ENCODE measurements at regions of chr7 and their contacts with region 1.

Region 1: GRCh38 chr7:143287935-143288826 is at the start of gene CASP2:
- DNase-seq: peak; percentile 99
- H3K4me3 Mint-ChIP-seq: peak within 1 kb of the TSS; percentile 93
- H3K27ac Mint-ChIP-seq: peak within 1 kb of the TSS; percentile 97
- H3K4me1 Mint-ChIP-seq: peaks cover 44% of the 10 kb centered on the region
- H3K27me3 Mint-ChIP-seq: no peaks in the 10 kb centered on the region
- total RNA-seq, gene CASP2: 117 to 129 TPM

Region 2: DNA sequence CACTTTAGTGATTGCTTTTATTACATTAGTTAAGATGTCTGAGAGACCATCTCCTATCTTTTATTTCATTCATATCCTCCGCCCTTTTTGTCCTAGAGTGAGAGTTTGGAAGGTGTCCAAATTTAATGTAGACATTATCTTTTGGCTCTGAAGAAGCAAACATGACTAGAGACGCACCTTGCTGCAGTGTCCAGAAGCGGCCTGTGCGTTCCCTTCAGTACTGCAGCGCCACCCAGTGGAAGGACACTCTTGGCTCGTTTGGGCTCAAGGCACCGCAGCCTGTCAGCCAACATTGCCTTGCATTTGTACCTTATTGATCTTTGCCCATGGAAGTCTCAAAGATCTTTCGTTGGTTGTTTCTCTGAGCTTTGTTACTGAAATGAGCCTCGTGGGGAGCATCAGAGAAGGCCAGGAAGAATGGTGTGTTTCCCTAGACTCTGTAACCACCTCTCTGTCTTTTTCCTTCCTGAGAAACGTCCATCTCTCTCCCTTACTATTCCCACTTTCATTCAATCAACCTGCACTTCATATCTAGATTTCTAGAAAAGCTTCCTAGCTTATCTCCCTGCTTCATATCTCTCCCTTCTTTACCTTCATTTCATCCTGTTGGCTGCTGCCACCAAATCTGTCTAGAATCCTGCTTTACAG is 17.4 kb after region 1 on chr7:
- CTCF ChIA-PET with region 1: interaction called, 11 read pairs
- POLR2A ChIA-PET with region 1: interaction called, 10 read pairs
- intact Hi-C with region 1: no loop called
- DNase-seq: peak; percentile 82
- H3K4me3 Mint-ChIP-seq: no peak overlapping the region
- H3K27ac Mint-ChIP-seq: peak overlapping the region; percentile 64
- H3K4me1 Mint-ChIP-seq: peaks cover 49% of the 10 kb centered on the region
- H3K27me3 Mint-ChIP-seq: no peaks in the 10 kb centered on the region

Measured in activated CD4-positive, alpha-beta memory T cell treated with anti-CD3 and anti-CD28 coated beads for 36 hours (primary cell).